Left ventricle myocardium superior (tissue), 1 donor: ENCODE measurements at regions of chr13 and their contacts with region 1.

Region 1: DNA sequence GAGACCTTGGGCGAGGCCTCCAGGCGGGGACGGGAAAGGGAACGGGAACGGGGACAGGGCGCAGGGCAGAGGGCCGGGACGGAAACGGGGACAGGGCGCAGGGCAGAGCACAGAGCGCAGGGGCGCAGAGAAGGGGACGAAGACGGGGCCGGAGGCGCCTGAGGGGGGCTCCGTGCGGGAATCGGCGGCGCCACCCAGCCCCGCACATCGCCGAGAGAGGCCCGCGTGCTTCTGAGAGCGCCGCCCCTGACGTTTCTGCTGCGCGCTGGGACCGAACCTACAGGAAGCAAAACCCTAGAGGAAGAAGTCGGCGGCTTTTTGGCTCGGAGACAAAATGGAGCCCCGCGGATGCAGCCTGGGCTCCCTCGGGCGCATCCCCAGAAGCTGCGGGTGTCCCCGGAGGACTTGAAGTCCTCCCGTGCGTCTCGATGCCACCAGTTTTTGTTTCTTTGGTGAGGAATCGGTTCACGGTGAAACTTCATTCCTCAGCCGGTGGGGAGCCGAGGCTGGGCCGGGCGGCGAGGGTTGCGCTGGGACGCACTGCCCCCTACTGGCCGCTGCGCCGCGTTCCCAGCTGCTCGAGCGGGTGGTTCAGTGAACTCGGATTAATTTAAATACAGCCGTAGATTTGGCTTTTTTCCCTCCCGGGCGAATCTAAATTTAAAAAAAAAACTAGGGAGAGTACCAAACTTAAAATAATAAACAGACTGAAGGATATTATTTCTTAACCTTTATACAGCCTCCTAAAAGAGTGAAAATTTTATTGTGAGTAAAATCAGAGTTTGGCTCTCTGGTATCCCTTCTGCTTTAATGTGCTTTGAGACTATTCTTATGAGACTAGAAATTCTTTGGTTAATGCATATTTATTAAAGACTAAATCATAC is 350.0 kb upstream of the ARGLU1 start:
- DNase-seq: peak; percentile 85
- ATAC-seq: peak; percentile 94

Region 2: GRCh38 chr13:106548064-106548696 is 369.7 kb before region 1 on chr13:
- intact Hi-C with region 1: loop called (anchors 10 kb)
- DNase-seq: no peak
- ATAC-seq: no peak

Region 3: GRCh38 chr13:106701771-106702341 is 216.1 kb before region 1 on chr13:
- intact Hi-C with region 1: loop called (anchors 2 kb)
- DNase-seq: no peak
- ATAC-seq: peak; percentile 84

Region 4: GRCh38 chr13:106967391-106967790 is 49.5 kb after region 1 on chr13:
- intact Hi-C with region 1: no loop called
- DNase-seq: no peak
- ATAC-seq: no peak

Region 5: DNA sequence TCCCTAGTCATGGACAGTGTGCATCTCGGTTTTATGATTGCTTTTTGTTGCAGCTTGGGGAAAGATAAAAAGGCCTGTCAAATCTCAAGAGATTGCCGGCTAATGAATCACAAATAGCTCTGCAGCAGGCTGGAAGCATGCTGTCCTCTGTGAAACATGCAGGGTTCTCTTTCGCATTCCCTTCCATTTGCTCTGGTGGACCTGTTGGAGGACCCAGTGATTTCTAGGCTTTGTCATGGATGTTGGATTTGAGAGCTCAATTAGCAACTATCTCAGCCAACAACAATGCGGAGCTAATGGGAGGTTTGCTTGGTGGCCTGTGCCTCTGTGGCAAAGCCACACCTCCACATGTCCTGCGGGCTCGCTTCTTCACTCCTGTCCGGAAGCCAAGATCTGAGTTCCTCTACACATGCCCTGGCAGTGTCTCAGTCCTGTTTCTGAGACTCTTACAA is 68.1 kb after region 1 on chr13:
- intact Hi-C with region 1: no loop called
- DNase-seq: no peak
- ATAC-seq: peak; percentile 80

Region 6: GRCh38 chr13:107124129-107124718 is 206.3 kb after region 1 on chr13:
- intact Hi-C with region 1: loop called (anchors 10 kb)
- DNase-seq: no peak
- ATAC-seq: no peak